ENCODE measurements at regions of chr9 and their contacts with region 1.

Region 1: GRCh38 chr9:91775011-91775707 is 174.9 kb downstream of the ROR2 start:
- DNase-seq: peak; percentile 69
- H3K4me3 ChIP-seq: no peak overlapping the region
- H3K27ac ChIP-seq: no peak overlapping the region
- H3K4me1 ChIP-seq: no peaks in the 10 kb centered on the region
- CTCF ChIP-seq: peak; percentile 87

Region 2: DNA sequence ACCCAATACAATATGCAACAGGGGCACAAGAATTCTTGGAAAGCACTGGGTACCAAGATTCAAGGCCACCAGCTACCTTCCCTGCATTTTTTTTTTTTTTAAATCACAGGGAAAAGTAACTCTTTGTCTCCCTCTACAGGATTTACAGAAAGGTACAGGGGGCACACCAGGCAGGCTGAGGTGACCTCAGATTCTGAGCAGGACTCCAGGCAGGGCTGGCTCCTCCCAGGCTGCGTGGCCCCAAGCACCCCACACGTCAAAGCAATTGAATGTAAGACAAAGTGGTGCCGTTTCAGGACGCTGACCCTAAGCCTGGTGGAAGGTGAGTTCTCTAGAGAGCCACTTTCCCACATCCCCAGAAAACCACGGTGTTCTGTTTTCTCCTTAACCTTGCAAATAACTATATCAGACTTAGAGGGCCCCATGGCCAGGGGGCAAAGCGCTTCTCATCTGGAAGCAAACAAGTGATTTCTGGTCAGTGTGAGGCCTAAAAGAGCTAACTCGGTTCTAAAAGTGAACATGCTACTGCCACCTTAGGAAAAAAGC is 47.8 kb before region 1 on chr9:
- CTCF ChIA-PET with region 1: no interaction called
- POLR2A ChIA-PET with region 1: no interaction called
- intact Hi-C with region 1: no loop called
- DNase-seq: peak; percentile 61
- H3K4me3 ChIP-seq: no peak overlapping the region
- H3K27ac ChIP-seq: no peak overlapping the region
- H3K4me1 ChIP-seq: peaks cover under 1% of the 10 kb centered on the region
- CTCF ChIP-seq: peak; percentile 86

Region 3: DNA sequence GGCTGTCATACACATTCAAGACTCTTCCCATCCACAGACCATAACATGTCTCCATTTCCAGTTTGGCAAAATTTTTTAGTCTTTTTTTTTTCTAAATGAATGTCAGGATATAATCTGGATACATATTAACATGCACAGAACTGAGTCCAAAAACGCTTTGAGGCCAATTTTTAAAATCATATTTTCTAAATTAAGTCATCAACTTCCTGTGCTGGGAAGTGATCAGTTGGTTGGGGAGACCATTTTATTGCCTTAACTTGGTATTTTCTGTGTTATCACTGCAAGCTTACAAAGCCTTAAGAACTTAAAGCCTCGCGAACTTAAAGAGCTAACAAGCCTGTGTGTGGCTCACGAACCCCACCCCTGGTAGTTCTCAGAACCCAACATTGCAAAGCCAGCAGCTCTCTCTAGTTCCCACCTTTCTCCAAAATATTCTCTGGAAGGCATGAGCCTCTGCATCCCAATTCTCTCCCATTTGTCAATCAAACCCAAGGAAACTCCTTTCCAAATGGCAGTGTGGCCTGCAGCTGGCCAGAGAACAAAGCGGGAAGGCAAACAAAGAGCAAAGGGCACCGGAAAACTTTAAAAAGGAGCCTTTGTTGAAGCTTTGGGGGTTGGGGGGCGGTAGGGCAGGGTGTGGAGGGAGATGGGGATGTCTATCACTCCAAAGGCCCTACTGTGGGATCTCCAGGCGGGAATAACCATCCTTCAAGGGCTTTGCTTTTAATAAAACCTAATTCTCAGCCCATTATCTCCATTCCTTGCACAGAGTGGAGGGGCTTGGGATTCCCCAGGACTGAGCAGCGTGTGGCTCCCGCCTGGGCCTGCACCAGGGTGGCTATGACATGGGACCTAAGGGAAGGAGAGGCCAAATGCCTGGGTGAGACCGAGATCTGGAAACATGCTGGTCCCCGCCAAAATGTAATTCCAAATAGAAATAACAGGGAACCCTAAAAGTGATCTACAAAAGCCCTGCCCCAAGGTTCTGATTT is 109.8 kb after region 1 on chr9:
- CTCF ChIA-PET with region 1: no interaction called
- POLR2A ChIA-PET with region 1: no interaction called
- intact Hi-C with region 1: loop called (anchors 10 kb)
- DNase-seq: no peak
- H3K4me3 ChIP-seq: no peak overlapping the region
- H3K27ac ChIP-seq: no peak overlapping the region
- H3K4me1 ChIP-seq: no peaks in the 10 kb centered on the region
- CTCF ChIP-seq: no peak

Region 4: GRCh38 chr9:91949946-91950664 is 174.9 kb after region 1 on chr9 and contains the start of gene ROR2:
- CTCF ChIA-PET with region 1: no interaction called
- POLR2A ChIA-PET with region 1: no interaction called
- intact Hi-C with region 1: loop called (anchors 10 kb)
- DNase-seq: no peak
- H3K4me3 ChIP-seq: no peak within 1 kb of the TSS
- H3K27ac ChIP-seq: no peak within 1 kb of the TSS
- H3K4me1 ChIP-seq: no peaks in the 10 kb centered on the region
- CTCF ChIP-seq: 0 out of 2 replicates have a peak, but pooled peaks have one; percentile 22
- total RNA-seq, gene ROR2: 0.19 TPM in 1 of 2 replicates, not detected in the other

Region 5: DNA sequence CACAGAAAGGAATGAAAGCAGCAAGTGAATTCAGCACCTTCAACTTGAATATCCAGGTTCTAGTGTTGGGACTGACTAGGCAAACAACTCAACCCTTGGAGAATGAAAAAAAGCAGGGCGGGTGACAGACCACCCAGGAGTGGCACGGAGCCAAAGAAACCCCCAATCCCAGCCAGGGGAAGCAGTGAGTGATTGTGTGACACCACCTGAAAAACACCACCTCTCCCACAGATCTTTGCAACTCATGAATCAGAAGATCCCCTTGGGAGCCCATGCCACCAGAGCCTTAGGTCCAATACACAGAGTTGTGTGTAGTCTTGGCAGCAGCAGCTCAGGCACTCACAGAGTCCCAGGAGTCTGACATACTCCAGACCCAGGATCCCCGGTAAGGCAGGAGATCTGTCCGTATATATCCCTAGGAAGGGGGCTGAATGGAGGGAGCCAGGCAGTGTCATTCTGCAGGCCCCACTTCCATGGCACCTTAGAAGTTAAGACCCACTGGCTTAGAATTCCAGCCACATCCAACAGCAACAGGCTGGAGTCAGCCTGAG is 197.0 kb after region 1 on chr9:
- CTCF ChIA-PET with region 1: no interaction called
- POLR2A ChIA-PET with region 1: no interaction called
- intact Hi-C with region 1: no loop called
- DNase-seq: no peak
- H3K4me3 ChIP-seq: no peak overlapping the region
- H3K27ac ChIP-seq: no peak overlapping the region
- H3K4me1 ChIP-seq: no peaks in the 10 kb centered on the region
- CTCF ChIP-seq: no peak

Region 6: GRCh38 chr9:92035687-92036410 is 260.7 kb after region 1 on chr9:
- CTCF ChIA-PET with region 1: no interaction called
- POLR2A ChIA-PET with region 1: no interaction called
- intact Hi-C with region 1: loop called (anchors 10 kb)
- DNase-seq: no peak
- H3K4me3 ChIP-seq: no peak overlapping the region
- H3K27ac ChIP-seq: no peak overlapping the region
- H3K4me1 ChIP-seq: no peaks in the 10 kb centered on the region
- CTCF ChIP-seq: no peak

Measured in OCI-LY7 (cell line).